ENCODE measurements at regions of chr15 and their contacts with region 1.

Region 1: GRCh38 chr15:76973362-76973743 is 21.6 kb upstream of the PSTPIP1 start:
- DNase-seq: peak in 1 of 2 donors; percentile 63
- ATAC-seq: peak; percentile 32 to 87 (median 70)
- H3K4me3 ChIP-seq: peak overlapping the region in 5 of 10 donors; percentile 7 to 45 (median 39)
- H3K27ac ChIP-seq: peak overlapping the region in 7 of 10 donors; percentile 24 to 83 (median 68)
- H3K4me1 ChIP-seq: peaks cover 5 to 28% (median 15%) of the 10 kb centered on the region in 9 donors
- H3K27me3 ChIP-seq: no peaks in the 10 kb centered on the region
- CTCF ChIP-seq: peak; percentile 14 to 77 (median 59)

Region 2: GRCh38 chr15:77014132-77015081 is 41.1 kb after region 1 on chr15:
- intact Hi-C with region 1: loop called in 1 of 10 experiments (anchors 5 kb)
- DNase-seq: no peak
- ATAC-seq: peak in 5 of 8 donors; percentile 24 to 60 (median 39)
- H3K4me3 ChIP-seq: peak overlapping the region in 1 of 10 donors; percentile 19
- H3K27ac ChIP-seq: peak overlapping the region in 2 of 10 donors; percentile 15 to 85
- H3K4me1 ChIP-seq: peaks cover 0 to 85% (median 9%) of the 10 kb centered on the region in 9 donors
- H3K27me3 ChIP-seq: no peaks in the 10 kb centered on the region
- CTCF ChIP-seq: no peak

Measured in heart right ventricle (tissue), 16 donors.